CD4-positive, alpha-beta memory T cell (primary cell): ENCODE measurements at regions of chr5 and their contacts with region 1.

Region 1: DNA sequence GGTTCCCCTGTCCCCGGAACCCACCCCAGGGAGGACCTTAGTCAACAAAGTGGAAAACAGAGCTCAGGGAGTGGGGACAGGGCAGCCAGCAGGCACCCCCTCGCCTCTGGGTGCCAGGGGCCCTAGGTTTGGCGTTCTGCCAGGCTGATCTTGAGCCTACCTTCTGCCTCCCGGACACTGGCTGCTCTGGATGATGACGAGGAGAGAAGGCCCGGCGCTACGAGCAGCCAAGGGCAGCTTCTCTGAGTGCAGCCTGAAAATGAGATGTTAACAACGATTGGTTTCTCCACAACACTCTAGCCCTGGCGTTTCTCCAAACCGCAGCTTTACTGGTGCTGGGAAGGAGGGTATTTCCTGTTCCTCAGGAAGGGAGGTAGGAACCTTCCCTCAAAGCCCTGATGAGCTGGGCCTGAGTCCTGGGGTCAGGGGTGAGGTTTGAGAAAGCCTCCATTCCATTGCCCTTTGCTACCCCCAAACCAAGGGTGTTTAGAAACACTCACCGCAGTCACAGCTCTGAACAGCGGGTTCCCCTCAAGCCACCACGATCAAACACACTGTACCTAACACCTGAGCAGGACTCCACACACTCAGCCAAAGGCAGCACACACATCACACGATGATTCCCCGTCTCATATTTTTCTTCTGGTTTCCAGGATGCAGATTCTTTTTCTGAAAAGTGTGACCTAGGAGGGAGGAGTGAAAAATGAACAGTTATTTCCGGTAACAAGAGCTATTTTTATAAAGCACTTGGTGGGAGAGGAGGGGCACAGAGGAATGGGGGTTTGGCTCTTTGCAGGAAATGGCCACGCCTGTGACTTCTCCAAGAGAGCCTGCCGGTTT is at the start of gene STING1:
- DNase-seq: peak; percentile 78 to 83 (median 80)
- H3K4me3 ChIP-seq: peak within 1 kb of the TSS; percentile 82 to 95
- H3K4me3 Mint-ChIP-seq: peak within 1 kb of the TSS; percentile 92 to 98 (median 94)
- H3K27ac ChIP-seq: peak within 1 kb of the TSS; percentile 86
- H3K27ac Mint-ChIP-seq: peak within 1 kb of the TSS; percentile 90 to 98 (median 97)
- H3K4me1 ChIP-seq: peaks cover 46% of the 10 kb centered on the region
- H3K4me1 Mint-ChIP-seq: peaks cover 21 to 57% (median 39%) of the 10 kb centered on the region in 4 donors
- H3K27me3 ChIP-seq: no peaks in the 10 kb centered on the region
- H3K27me3 Mint-ChIP-seq: no peaks in the 10 kb centered on the region
- total RNA-seq, gene STING1: 141 to 144 TPM

Region 2: DNA sequence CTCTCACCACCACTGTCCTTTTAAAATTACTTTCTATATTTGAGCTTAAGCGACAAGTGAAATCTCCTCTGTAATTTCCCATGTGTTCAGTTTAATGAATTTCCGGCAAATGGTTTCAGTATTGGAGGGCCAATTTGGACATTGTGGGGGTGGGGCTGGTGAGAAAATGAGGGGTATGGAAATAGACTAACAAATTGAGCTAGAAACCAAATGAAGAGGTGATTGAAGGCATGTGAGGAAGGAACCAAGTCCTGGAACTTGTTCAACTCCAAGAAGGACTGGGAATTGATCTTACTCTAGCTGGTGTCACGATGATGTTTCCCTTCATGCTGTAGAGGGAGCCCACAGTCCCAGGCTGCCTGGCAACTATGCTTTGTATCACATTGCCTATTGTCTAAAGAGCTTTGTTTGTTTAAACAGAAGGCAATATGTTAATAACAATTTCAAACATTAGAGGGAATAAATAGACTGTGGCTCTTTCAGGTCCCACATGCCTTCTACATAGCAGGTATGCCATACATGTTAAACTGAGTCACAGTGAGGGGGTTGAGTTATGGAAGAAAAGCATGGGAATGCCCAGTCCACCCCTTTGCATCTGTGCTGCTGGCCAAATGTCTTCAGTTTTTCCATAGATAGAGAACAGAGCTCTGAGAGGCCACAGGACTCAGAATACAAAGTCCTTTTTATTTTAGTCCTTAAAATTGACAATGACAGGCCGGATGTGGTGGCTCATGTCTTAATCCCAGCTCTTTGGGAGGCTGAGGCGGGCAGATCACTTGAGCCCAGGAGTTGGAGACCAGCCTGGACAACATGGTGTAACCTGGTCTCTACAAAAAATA is 213.7 kb before region 1 on chr5:
- CTCF ChIA-PET with region 1: no interaction called
- POLR2A ChIA-PET with region 1: no interaction called
- intact Hi-C with region 1: no loop called
- DNase-seq: no peak
- H3K4me3 ChIP-seq: no peak overlapping the region
- H3K4me3 Mint-ChIP-seq: no peak overlapping the region
- H3K27ac ChIP-seq: no peak overlapping the region
- H3K27ac Mint-ChIP-seq: peak overlapping the region in 3 of 7 donors; percentile 18 to 44 (median 37)
- H3K4me1 ChIP-seq: peaks cover 14% of the 10 kb centered on the region
- H3K4me1 Mint-ChIP-seq: peaks cover 16 to 29% (median 19%) of the 10 kb centered on the region in 4 donors
- H3K27me3 ChIP-seq: no peaks in the 10 kb centered on the region
- H3K27me3 Mint-ChIP-seq: peaks cover 0 to 1% of the 10 kb centered on the region in 2 donors

Region 3: GRCh38 chr5:139439013-139439903 is 43.0 kb before region 1 on chr5 and contains the start of gene DNAJC18:
- CTCF ChIA-PET with region 1: interaction called, 6 read pairs
- POLR2A ChIA-PET with region 1: interaction called, 111 read pairs
- intact Hi-C with region 1: loop called (anchors 1 kb)
- DNase-seq: peak; percentile 84 to 90 (median 86)
- H3K4me3 ChIP-seq: peak within 1 kb of the TSS; percentile 83 to 91
- H3K4me3 Mint-ChIP-seq: peak within 1 kb of the TSS; percentile 96 to 99 (median 98)
- H3K27ac ChIP-seq: peak within 1 kb of the TSS; percentile 99
- H3K27ac Mint-ChIP-seq: peak within 1 kb of the TSS; percentile 93 to 100 (median 100)
- H3K4me1 ChIP-seq: peaks cover 31% of the 10 kb centered on the region
- H3K4me1 Mint-ChIP-seq: peaks cover 32 to 63% (median 41%) of the 10 kb centered on the region in 4 donors
- H3K27me3 ChIP-seq: no peaks in the 10 kb centered on the region
- H3K27me3 Mint-ChIP-seq: no peaks in the 10 kb centered on the region
- total RNA-seq, gene DNAJC18: 6.2 to 7.3 TPM

Region 4: GRCh38 chr5:139458580-139459406 is 23.5 kb before region 1 on chr5:
- CTCF ChIA-PET with region 1: interaction called, 11 read pairs
- POLR2A ChIA-PET with region 1: interaction called, 82 read pairs
- intact Hi-C with region 1: loop called (anchors 1 kb)
- DNase-seq: peak; percentile 83 to 94 (median 86)
- H3K4me3 ChIP-seq: peak overlapping the region in 1 of 2 donors; percentile 20
- H3K4me3 Mint-ChIP-seq: peak overlapping the region in 7 of 8 donors; percentile 64 to 89 (median 76)
- H3K27ac ChIP-seq: peak overlapping the region; percentile 68
- H3K27ac Mint-ChIP-seq: peak overlapping the region; percentile 91 to 98 (median 96)
- H3K4me1 ChIP-seq: peaks cover 60% of the 10 kb centered on the region
- H3K4me1 Mint-ChIP-seq: peaks cover 39 to 68% (median 53%) of the 10 kb centered on the region in 4 donors
- H3K27me3 ChIP-seq: no peaks in the 10 kb centered on the region
- H3K27me3 Mint-ChIP-seq: no peaks in the 10 kb centered on the region

Region 5: GRCh38 chr5:139468421-139468931 is 13.8 kb before region 1 on chr5:
- CTCF ChIA-PET with region 1: interaction called, 11 read pairs
- POLR2A ChIA-PET with region 1: interaction called, 131 read pairs
- intact Hi-C with region 1: no loop called
- DNase-seq: no peak
- H3K4me3 ChIP-seq: no peak overlapping the region
- H3K4me3 Mint-ChIP-seq: peak overlapping the region in 7 of 8 donors; percentile 38 to 84 (median 71)
- H3K27ac ChIP-seq: no peak overlapping the region
- H3K27ac Mint-ChIP-seq: peak overlapping the region; percentile 67 to 94 (median 85)
- H3K4me1 ChIP-seq: peaks cover 54% of the 10 kb centered on the region
- H3K4me1 Mint-ChIP-seq: peaks cover 32 to 55% (median 45%) of the 10 kb centered on the region in 4 donors
- H3K27me3 ChIP-seq: no peaks in the 10 kb centered on the region
- H3K27me3 Mint-ChIP-seq: no peaks in the 10 kb centered on the region

Region 6: DNA sequence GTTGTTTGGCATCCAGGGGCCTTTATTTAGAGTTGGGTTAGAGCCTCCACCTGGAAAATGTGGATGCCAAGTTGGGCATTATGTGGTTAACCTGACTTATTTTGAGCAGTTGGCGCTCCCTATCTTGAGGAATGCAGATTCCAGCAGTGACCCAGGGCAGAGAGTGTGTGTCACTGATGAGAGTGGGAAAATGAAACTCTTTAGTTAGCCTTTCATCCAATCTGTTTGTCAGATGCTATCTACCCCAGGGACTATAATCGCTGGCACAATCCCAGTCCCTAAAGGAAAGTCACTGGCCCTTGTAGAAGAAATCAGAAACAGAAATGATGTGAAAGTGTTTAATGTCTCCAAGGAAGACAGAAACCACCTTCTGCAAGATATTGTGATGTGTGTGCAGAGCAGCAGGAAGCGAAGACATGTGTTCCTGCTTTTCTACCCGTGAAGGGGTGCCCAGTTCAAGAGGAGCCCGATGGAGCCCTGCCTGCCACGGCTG is 10.5 kb after region 1 on chr5:
- CTCF ChIA-PET with region 1: no interaction called
- POLR2A ChIA-PET with region 1: interaction called, 25 read pairs
- intact Hi-C with region 1: no loop called
- DNase-seq: no peak
- H3K4me3 ChIP-seq: no peak overlapping the region
- H3K4me3 Mint-ChIP-seq: peak overlapping the region in 2 of 8 donors; percentile 20 to 42
- H3K27ac ChIP-seq: no peak overlapping the region
- H3K27ac Mint-ChIP-seq: peak overlapping the region in 2 of 7 donors; percentile 17 to 26
- H3K4me1 ChIP-seq: peaks cover 15% of the 10 kb centered on the region
- H3K4me1 Mint-ChIP-seq: peaks cover 9 to 29% (median 18%) of the 10 kb centered on the region in 4 donors
- H3K27me3 ChIP-seq: no peaks in the 10 kb centered on the region
- H3K27me3 Mint-ChIP-seq: no peaks in the 10 kb centered on the region